CD8-positive, alpha-beta T cell (primary cell): ENCODE measurements at regions of chr19 and their contacts with region 1.

Region 1: DNA sequence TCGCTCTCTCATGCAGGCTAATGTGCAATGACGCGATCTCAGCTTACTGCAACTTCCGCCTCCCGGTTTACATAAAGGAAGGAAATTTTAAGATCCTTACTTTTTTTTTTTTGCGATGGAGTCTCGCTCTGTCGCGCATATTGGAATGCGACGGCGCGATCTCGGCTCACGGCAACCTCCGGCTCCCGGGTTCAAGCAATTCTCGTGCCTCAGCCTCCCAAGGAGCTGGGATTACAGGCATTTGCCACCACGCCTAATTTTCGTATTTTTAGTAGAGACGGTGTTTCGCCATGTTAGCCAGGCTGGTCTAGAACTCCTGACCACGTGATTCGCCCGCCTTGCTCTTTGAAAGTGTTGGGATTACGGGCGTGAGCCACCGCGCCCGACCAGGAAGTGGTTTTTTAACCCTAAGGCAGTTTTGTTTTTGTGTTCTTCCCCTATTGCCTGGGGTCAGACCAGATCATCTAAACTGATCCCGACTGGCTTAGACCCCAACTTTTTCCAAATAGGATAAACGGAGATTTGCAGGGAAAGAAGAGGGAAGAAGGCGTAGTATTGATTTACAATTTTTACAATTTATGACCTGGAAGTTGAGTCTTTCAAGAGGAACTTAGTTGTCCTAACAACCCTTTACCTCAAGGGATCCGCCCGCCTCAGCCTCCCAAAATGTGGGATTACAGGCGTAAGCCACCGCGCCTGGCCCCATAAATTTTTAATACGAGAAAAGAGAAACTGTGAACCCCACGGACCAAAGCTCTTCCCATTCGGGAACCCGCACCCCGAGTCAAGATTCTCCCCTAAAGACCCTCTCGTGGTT is 142.0 kb downstream of the ZNF737 start:
- DNase-seq: peak in 7 of 9 experiments; percentile 4 to 62 (median 28)
- ATAC-seq: no peak
- H3K4me3 ChIP-seq: peak overlapping the region; percentile 52 to 88
- H3K4me3 Mint-ChIP-seq: peak overlapping the region; percentile 97
- H3K27ac ChIP-seq: peak overlapping the region; percentile 11 to 53
- H3K27ac Mint-ChIP-seq: peak overlapping the region; percentile 93
- H3K4me1 ChIP-seq: no peaks in the 10 kb centered on the region
- H3K4me1 Mint-ChIP-seq: peaks cover 8% of the 10 kb centered on the region
- H3K27me3 ChIP-seq: no peaks in the 10 kb centered on the region
- H3K27me3 Mint-ChIP-seq: no peaks in the 10 kb centered on the region
- CTCF ChIP-seq: no peak

Region 2: GRCh38 chr19:20287070-20287469 is 136.5 kb before region 1 on chr19:
- CTCF ChIA-PET with region 1: no interaction called
- POLR2A ChIA-PET with region 1: no interaction called
- intact Hi-C with region 1: no loop called
- DNase-seq: no peak
- ATAC-seq: no peak
- H3K4me3 ChIP-seq: no peak overlapping the region
- H3K4me3 Mint-ChIP-seq: no peak overlapping the region
- H3K27ac ChIP-seq: no peak overlapping the region
- H3K27ac Mint-ChIP-seq: no peak overlapping the region
- H3K4me1 ChIP-seq: no peaks in the 10 kb centered on the region
- H3K4me1 Mint-ChIP-seq: no peaks in the 10 kb centered on the region
- H3K27me3 ChIP-seq: no peaks in the 10 kb centered on the region
- H3K27me3 Mint-ChIP-seq: no peaks in the 10 kb centered on the region
- CTCF ChIP-seq: no peak

Region 3: DNA sequence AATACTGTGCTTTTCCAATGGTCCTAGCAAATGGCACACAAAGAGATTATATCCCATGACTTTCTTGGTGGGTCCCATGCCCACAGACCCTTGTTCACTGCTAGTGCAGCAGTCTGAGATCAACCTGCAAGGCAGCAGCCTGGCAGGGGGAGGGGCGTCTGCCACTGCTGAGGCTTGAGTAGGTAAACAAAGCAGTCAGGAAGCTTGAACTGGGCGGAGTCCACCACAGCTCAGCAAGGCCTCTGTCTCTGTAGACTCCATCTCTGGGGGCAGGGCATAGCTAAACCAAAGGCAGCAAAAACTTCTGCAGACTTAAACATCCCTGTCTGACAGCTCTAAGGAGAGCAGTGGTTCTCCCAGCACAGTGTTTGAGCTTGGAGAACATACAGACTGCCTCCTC is 59.1 kb after region 1 on chr19:
- CTCF ChIA-PET with region 1: no interaction called
- POLR2A ChIA-PET with region 1: interaction called, 11 read pairs
- intact Hi-C with region 1: no loop called
- DNase-seq: peak in 8 of 9 experiments; percentile 2 to 62 (median 17)
- ATAC-seq: no peak
- H3K4me3 ChIP-seq: no peak overlapping the region
- H3K4me3 Mint-ChIP-seq: peak overlapping the region; percentile 17
- H3K27ac ChIP-seq: no peak overlapping the region
- H3K27ac Mint-ChIP-seq: no peak overlapping the region
- H3K4me1 ChIP-seq: no peaks in the 10 kb centered on the region
- H3K4me1 Mint-ChIP-seq: peaks cover 19% of the 10 kb centered on the region
- H3K27me3 ChIP-seq: no peaks in the 10 kb centered on the region
- H3K27me3 Mint-ChIP-seq: no peaks in the 10 kb centered on the region
- CTCF ChIP-seq: no peak

Region 4: GRCh38 chr19:20661150-20661819 is 237.7 kb after region 1 on chr19 and contains the start of gene ZNF626:
- CTCF ChIA-PET with region 1: no interaction called
- POLR2A ChIA-PET with region 1: no interaction called
- intact Hi-C with region 1: loop called (anchors 1 to 2 kb)
- DNase-seq: peak; percentile 78 to 97 (median 90)
- ATAC-seq: peak; percentile 98
- H3K4me3 ChIP-seq: peak within 1 kb of the TSS; percentile 67 to 91
- H3K4me3 Mint-ChIP-seq: peak within 1 kb of the TSS; percentile 94
- H3K27ac ChIP-seq: peak within 1 kb of the TSS; percentile 73 to 91
- H3K27ac Mint-ChIP-seq: peak within 1 kb of the TSS; percentile 97
- H3K4me1 ChIP-seq: peaks cover 12% of the 10 kb centered on the region
- H3K4me1 Mint-ChIP-seq: peaks cover 43% of the 10 kb centered on the region
- H3K27me3 ChIP-seq: no peaks in the 10 kb centered on the region
- H3K27me3 Mint-ChIP-seq: no peaks in the 10 kb centered on the region
- CTCF ChIP-seq: no peak
- total RNA-seq, gene ZNF626: 5.7 to 6.6 TPM